A673 (cell line): ENCODE measurements at regions of chr19 and their contacts with region 1.

Region 1: GRCh38 chr19:11780431-11781020 is 13.7 kb downstream of the ZNF441 start:
- DNase-seq: no peak
- H3K4me3 ChIP-seq: no peak overlapping the region
- H3K27ac ChIP-seq: no peak overlapping the region
- H3K4me1 ChIP-seq: no peaks in the 10 kb centered on the region
- H3K27me3 ChIP-seq: no peaks in the 10 kb centered on the region
- CTCF ChIP-seq: no peak

Region 2: DNA sequence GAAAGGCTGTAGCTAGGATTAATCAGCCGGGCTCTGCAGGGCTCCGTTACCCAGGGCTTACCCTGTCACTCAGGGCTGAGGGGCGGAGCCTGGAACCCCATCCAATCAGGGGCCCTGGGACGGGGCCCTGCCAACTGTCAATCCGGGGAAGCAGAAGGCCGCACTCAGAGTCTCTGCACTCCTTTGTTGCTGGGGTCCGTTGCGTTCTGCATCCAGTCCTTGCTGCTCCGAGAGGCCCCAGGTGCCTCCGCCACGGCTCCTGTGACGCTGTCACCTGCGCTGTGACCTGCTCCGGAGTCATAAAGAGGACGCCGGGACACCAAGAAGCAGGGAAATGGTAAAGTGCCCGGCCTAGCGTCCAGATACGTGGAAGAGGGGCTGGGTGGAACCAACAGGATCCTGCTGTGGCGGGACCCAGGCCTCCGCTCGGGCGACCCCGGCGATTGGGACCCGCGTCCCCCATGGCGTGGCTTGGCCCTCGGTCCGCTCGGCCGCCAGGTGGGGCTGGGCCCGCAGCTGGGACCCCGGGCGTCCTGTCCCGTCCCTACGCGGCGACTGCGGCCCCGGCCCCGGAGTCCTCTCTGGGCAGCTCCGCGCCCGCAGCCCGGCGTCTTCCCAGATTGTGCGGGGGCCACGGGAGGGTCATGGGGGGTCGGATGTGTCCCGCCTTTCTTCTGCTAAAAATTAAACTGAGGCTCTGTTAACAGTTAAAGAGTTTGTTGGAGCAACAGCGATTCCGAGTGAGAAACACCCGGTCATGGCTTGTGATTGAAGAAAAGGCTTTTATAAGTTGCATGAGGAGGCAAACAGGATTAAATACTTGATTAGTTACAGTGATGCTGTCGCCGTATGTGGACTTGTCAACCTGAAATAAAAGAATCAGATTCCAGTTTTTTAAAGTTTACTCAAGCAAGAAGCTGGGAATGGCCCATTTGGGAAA is 18.1 kb after region 1 on chr19 and contains the start of gene ZNF491:
- CTCF ChIA-PET with region 1: no interaction called
- POLR2A ChIA-PET with region 1: no interaction called
- intact Hi-C with region 1: no loop called
- DNase-seq: peak; percentile 96
- H3K4me3 ChIP-seq: peak within 1 kb of the TSS; percentile 62
- H3K27ac ChIP-seq: peak within 1 kb of the TSS; percentile 80
- H3K4me1 ChIP-seq: peaks cover 8% of the 10 kb centered on the region
- H3K27me3 ChIP-seq: no peaks in the 10 kb centered on the region
- CTCF ChIP-seq: no peak
- total RNA-seq, gene ZNF491: 0.60 and 1.7 TPM in 2 replicates

Region 3: GRCh38 chr19:11856596-11857250 is 76.2 kb after region 1 on chr19:
- CTCF ChIA-PET with region 1: no interaction called
- POLR2A ChIA-PET with region 1: interaction called, 10 read pairs
- intact Hi-C with region 1: no loop called
- DNase-seq: no peak
- H3K4me3 ChIP-seq: no peak overlapping the region
- H3K27ac ChIP-seq: no peak overlapping the region
- H3K4me1 ChIP-seq: no peaks in the 10 kb centered on the region
- H3K27me3 ChIP-seq: no peaks in the 10 kb centered on the region
- CTCF ChIP-seq: no peak

Region 4: GRCh38 chr19:11964858-11965645 is 184.5 kb after region 1 on chr19 and contains the start of gene ZNF763:
- CTCF ChIA-PET with region 1: no interaction called
- POLR2A ChIA-PET with region 1: no interaction called
- intact Hi-C with region 1: no loop called
- DNase-seq: peak; percentile 86
- H3K4me3 ChIP-seq: peak within 1 kb of the TSS; percentile 48
- H3K27ac ChIP-seq: no peak within 1 kb of the TSS
- H3K4me1 ChIP-seq: peaks cover 7% of the 10 kb centered on the region
- H3K27me3 ChIP-seq: no peaks in the 10 kb centered on the region
- CTCF ChIP-seq: no peak
- total RNA-seq, gene ZNF763: 0.24 TPM in 1 of 2 replicates, not detected in the other